Naive thymus-derived CD4-positive, alpha-beta T cell (primary cell): ENCODE measurements at regions of chr19 and their contacts with region 1.

Region 1: DNA sequence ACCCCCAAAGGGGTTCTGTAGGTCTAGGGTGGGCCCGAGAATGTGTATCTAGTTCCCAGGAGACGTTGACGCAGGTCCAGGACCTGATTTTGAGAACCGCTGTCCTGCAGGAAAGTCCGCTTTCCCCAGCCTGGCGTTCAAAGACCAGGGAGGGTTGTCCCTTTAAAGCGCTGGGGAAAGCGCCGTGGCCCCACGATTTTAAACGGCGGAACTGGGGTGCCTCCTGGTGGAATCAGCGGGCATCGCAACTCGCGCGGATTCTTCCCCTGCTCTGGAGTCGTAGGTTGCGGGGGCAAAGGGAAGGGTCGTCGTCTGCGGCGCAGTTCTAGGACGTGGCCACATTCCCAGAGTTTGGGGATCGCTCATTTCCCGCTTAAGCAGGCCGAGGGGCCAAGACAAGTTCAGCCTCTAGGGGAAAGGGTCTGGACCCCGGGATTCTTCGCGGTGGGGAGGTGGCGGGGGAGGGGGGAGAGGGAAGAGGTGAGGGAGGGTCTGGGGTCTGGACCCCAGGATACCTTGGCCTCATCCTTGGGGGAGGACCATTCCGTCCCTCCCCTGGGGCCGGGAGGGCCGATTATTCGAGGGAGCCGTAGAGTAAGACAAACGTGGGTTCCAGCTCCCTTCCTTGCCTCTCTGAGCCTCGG is 7.7 kb downstream of the PNMA8B start:
- DNase-seq: peak; percentile 43 to 80 (median 65)
- ATAC-seq: peak; percentile 79
- H3K4me3 ChIP-seq: no peak overlapping the region
- H3K4me3 Mint-ChIP-seq: peak overlapping the region in 6 of 10 donors; percentile 20 to 67 (median 35)
- H3K27ac ChIP-seq: no peak overlapping the region
- H3K27ac Mint-ChIP-seq: peak overlapping the region in 1 of 9 donors; percentile 13
- H3K4me1 ChIP-seq: peaks cover 3 to 21% of the 10 kb centered on the region in 2 donors
- H3K4me1 Mint-ChIP-seq: peaks cover 12 to 50% (median 34%) of the 10 kb centered on the region in 7 donors
- H3K27me3 ChIP-seq: peaks cover 5 to 34% of the 10 kb centered on the region in 2 donors
- H3K27me3 Mint-ChIP-seq: peaks cover 60 to 88% (median 71%) of the 10 kb centered on the region in 5 donors

Region 2: DNA sequence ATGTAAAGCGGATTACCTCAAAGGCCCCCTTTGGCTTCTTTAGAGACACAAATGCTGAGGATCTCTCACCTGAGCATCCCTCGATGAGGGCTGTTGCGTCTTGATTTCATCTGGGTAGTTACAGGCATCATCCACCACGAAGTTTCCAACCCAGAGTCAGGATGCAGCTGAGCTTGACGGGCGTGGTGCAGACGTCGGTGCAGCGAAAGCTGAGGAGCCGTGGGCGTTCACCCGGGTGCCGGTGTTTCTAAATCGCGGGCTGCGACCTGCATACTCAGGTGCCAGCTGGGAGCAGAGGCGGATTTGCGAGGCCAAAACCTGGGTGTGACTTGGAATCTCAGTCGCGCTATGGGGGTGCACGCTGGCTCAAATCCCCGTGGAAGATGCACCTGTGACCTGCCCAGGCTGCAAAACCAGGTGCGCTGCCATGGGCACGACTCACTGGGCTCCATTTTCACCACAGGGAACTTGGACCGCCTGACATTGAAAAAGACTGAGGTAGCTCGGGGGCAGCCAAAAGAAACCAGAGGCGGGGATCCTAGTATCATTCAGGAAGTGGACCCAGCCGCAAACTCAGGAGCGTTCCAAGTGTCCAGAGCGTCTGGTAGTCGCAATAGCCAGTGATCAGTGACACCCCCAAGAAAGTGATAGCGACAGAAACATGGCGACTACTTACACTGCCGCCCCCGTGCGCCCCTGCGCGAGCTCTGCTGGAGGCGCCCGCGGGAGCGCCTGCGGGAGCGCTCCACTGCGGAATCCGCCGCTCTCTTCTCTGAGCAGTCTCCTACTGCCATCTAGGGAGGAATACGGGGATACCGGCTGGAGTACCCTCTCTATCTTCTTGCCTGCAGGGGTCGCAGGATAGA is 410.7 kb before region 1 on chr19:
- CTCF ChIA-PET with region 1: no interaction called
- POLR2A ChIA-PET with region 1: no interaction called
- intact Hi-C with region 1: loop called in 1 of 2 experiments (anchors 5 kb)
- DNase-seq: peak in 2 of 9 donors; percentile 6 to 14
- ATAC-seq: peak; percentile 68
- H3K4me3 ChIP-seq: no peak overlapping the region
- H3K4me3 Mint-ChIP-seq: peak overlapping the region in 8 of 10 donors; percentile 16 to 61 (median 41)
- H3K27ac ChIP-seq: no peak overlapping the region
- H3K27ac Mint-ChIP-seq: no peak overlapping the region
- H3K4me1 ChIP-seq: no peaks in the 10 kb centered on the region
- H3K4me1 Mint-ChIP-seq: peaks cover 3 to 15% (median 9%) of the 10 kb centered on the region in 7 donors
- H3K27me3 ChIP-seq: peaks cover 0 to 12% of the 10 kb centered on the region in 2 donors
- H3K27me3 Mint-ChIP-seq: peaks cover 73 to 87% (median 77%) of the 10 kb centered on the region in 5 donors

Region 3: DNA sequence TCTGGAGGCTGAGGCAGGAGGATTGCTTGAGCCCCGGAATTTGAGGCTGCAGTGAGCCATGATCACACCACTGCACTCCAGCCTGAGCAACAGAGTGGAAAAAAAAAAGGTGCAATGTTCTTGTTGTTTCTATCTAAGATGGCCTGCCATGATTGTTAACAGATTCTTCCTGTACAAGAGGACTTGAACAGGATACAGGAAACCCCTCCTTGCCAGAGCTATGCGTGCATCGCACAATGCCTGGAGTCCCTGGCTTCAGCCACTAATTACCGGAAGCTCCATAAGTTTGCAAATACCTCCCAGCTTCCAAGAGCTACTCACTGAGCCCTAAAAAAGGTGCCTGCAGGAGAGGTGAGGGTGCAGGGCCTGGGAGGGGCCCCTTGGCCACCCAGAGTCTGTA is 204.2 kb before region 1 on chr19:
- CTCF ChIA-PET with region 1: interaction called, 5 read pairs
- POLR2A ChIA-PET with region 1: no interaction called
- intact Hi-C with region 1: loop called (anchors 1 kb)
- DNase-seq: no peak
- ATAC-seq: no peak
- H3K4me3 ChIP-seq: no peak overlapping the region
- H3K4me3 Mint-ChIP-seq: no peak overlapping the region
- H3K27ac ChIP-seq: no peak overlapping the region
- H3K27ac Mint-ChIP-seq: peak overlapping the region in 1 of 9 donors; percentile 25
- H3K4me1 ChIP-seq: no peaks in the 10 kb centered on the region
- H3K4me1 Mint-ChIP-seq: peaks cover 0 to 3% (median 0%) of the 10 kb centered on the region in 7 donors
- H3K27me3 ChIP-seq: no peaks in the 10 kb centered on the region
- H3K27me3 Mint-ChIP-seq: peaks cover 8 to 11% (median 11%) of the 10 kb centered on the region in 5 donors

Region 4: GRCh38 chr19:46308510-46308909 is 179.4 kb before region 1 on chr19:
- CTCF ChIA-PET with region 1: no interaction called
- POLR2A ChIA-PET with region 1: no interaction called
- intact Hi-C with region 1: no loop called
- DNase-seq: no peak
- ATAC-seq: no peak
- H3K4me3 ChIP-seq: no peak overlapping the region
- H3K4me3 Mint-ChIP-seq: no peak overlapping the region
- H3K27ac ChIP-seq: no peak overlapping the region
- H3K27ac Mint-ChIP-seq: no peak overlapping the region
- H3K4me1 ChIP-seq: no peaks in the 10 kb centered on the region
- H3K4me1 Mint-ChIP-seq: peaks cover 0 to 4% (median 0%) of the 10 kb centered on the region in 7 donors
- H3K27me3 ChIP-seq: no peaks in the 10 kb centered on the region
- H3K27me3 Mint-ChIP-seq: no peaks in the 10 kb centered on the region

Region 5: DNA sequence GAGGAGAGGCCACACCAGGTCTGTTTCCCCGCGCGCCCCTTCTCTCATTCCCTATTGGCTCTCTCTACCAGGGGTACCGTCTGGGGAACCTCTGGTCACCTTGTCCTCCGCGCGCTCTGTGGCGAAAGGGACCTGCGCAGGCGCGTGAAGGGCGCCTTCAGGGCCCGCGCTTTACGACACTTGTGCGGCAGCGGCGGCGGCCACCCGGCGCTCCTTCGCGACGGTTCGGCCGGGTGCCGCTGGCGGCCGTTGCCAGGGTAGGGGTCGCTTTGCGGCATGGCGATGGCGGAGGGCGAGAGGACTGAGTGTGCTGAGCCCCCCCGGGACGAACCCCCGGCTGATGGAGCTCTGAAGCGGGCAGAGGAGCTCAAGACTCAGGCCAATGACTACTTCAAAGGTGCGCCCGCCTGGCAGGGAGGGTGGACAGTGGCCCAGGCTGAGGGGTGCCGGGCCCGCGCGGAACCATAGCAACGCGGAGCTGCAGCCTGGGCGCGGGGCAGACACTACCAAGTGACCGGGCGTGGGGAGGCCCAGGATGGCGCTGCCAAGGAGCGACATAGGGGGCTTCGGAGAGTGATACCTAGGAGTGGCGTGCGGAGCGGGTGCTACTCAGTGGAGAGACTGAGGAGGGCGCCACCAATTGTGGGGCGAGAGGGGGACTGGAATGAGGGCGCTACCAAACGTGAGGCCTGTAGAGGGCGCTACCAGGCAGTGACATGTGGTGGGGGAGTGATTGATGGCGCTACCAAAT is 140.9 kb before region 1 on chr19 and contains the start of gene PPP5C:
- CTCF ChIA-PET with region 1: interaction called, 3 read pairs
- POLR2A ChIA-PET with region 1: no interaction called
- intact Hi-C with region 1: loop called in 1 of 2 experiments (anchors 2 kb)
- DNase-seq: peak; percentile 74 to 89 (median 79)
- ATAC-seq: peak; percentile 90
- H3K4me3 ChIP-seq: peak within 1 kb of the TSS; percentile 73
- H3K4me3 Mint-ChIP-seq: peak within 1 kb of the TSS; percentile 87 to 97 (median 94)
- H3K27ac ChIP-seq: peak within 1 kb of the TSS; percentile 89
- H3K27ac Mint-ChIP-seq: peak within 1 kb of the TSS; percentile 85 to 97 (median 92)
- H3K4me1 ChIP-seq: peaks cover 39 to 43% of the 10 kb centered on the region in 2 donors
- H3K4me1 Mint-ChIP-seq: peaks cover 49 to 63% (median 52%) of the 10 kb centered on the region in 7 donors
- H3K27me3 ChIP-seq: no peaks in the 10 kb centered on the region
- H3K27me3 Mint-ChIP-seq: peaks cover 0 to 23% (median 0%) of the 10 kb centered on the region in 5 donors
- total RNA-seq, gene PPP5C: 41.4 to 107 (median 52.0) TPM

Region 6: GRCh38 chr19:46392243-46392801 is 95.6 kb before region 1 on chr19:
- CTCF ChIA-PET with region 1: interaction called, 6 read pairs
- POLR2A ChIA-PET with region 1: no interaction called
- intact Hi-C with region 1: loop called (anchors 1 kb)
- DNase-seq: no peak
- ATAC-seq: no peak
- H3K4me3 ChIP-seq: no peak overlapping the region
- H3K4me3 Mint-ChIP-seq: no peak overlapping the region
- H3K27ac ChIP-seq: peak overlapping the region; percentile 19
- H3K27ac Mint-ChIP-seq: peak overlapping the region in 3 of 9 donors; percentile 2 to 51 (median 40)
- H3K4me1 ChIP-seq: no peaks in the 10 kb centered on the region
- H3K4me1 Mint-ChIP-seq: peaks cover 0 to 18% (median 6%) of the 10 kb centered on the region in 7 donors
- H3K27me3 ChIP-seq: no peaks in the 10 kb centered on the region
- H3K27me3 Mint-ChIP-seq: no peaks in the 10 kb centered on the region

Region 7: GRCh38 chr19:46404055-46404752 is 83.7 kb before region 1 on chr19:
- CTCF ChIA-PET with region 1: interaction called, 10 read pairs
- POLR2A ChIA-PET with region 1: no interaction called
- intact Hi-C with region 1: loop called (anchors 1 kb)
- DNase-seq: no peak
- ATAC-seq: peak; percentile 22
- H3K4me3 ChIP-seq: peak overlapping the region; percentile 2
- H3K4me3 Mint-ChIP-seq: peak overlapping the region; percentile 34 to 94 (median 74)
- H3K27ac ChIP-seq: no peak overlapping the region
- H3K27ac Mint-ChIP-seq: peak overlapping the region in 2 of 9 donors; percentile 42 to 74
- H3K4me1 ChIP-seq: peaks cover 0 to 15% of the 10 kb centered on the region in 2 donors
- H3K4me1 Mint-ChIP-seq: peaks cover 10 to 30% (median 21%) of the 10 kb centered on the region in 7 donors
- H3K27me3 ChIP-seq: peaks cover 0 to 15% of the 10 kb centered on the region in 2 donors
- H3K27me3 Mint-ChIP-seq: peaks cover 49 to 76% (median 57%) of the 10 kb centered on the region in 5 donors

Region 8: DNA sequence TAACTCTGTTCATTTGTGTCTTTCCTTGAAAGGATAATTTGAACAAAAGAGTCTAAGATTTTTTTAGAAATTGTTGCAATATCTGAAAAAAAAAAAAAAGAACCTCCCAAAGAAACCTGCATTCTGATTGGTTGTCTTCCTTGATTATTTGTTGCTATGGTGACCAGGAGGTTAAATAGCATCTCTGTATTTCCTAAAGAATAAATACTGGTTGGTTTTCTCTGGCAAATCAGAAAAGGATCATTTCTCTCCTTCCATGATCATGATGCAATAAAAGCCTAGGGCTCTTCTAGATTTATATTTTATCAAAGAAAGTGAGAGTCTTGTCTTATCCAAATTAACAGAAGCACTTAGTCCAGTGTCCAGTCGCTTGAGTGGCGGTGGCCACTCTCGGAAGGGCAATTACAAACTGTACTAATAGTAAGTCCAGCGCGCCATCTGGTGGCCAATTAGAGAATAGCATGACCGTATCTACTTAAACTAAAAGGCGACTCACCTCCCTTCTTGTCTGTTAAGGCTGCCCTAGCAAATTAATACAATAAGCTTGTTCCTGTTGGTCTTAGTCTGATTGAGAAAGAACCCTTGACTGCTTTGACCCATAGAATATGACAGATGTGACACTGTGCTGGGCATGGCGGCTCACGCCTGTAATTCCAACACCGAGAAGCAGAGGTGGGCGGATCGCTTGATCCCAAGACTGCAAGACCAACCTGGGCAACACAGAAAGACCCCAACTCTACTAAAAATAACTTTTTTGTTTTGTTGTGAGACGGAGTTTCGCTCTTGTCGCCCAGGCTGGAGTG is 54.7 kb after region 1 on chr19:
- CTCF ChIA-PET with region 1: interaction called, 3 read pairs
- POLR2A ChIA-PET with region 1: no interaction called
- intact Hi-C with region 1: loop called in 1 of 2 experiments (anchors 2 kb)
- DNase-seq: peak; percentile 46 to 73 (median 64)
- ATAC-seq: peak; percentile 87
- H3K4me3 ChIP-seq: no peak overlapping the region
- H3K4me3 Mint-ChIP-seq: no peak overlapping the region
- H3K27ac ChIP-seq: no peak overlapping the region
- H3K27ac Mint-ChIP-seq: peak overlapping the region in 2 of 9 donors; percentile 14 to 16
- H3K4me1 ChIP-seq: no peaks in the 10 kb centered on the region
- H3K4me1 Mint-ChIP-seq: peaks cover 2 to 13% (median 5%) of the 10 kb centered on the region in 7 donors
- H3K27me3 ChIP-seq: no peaks in the 10 kb centered on the region
- H3K27me3 Mint-ChIP-seq: peaks cover 0 to 11% (median 0%) of the 10 kb centered on the region in 5 donors

Region 9: GRCh38 chr19:46776927-46777911 is 289.3 kb after region 1 on chr19:
- CTCF ChIA-PET with region 1: no interaction called
- POLR2A ChIA-PET with region 1: no interaction called
- intact Hi-C with region 1: no loop called
- DNase-seq: no peak
- ATAC-seq: no peak
- H3K4me3 ChIP-seq: no peak overlapping the region
- H3K4me3 Mint-ChIP-seq: no peak overlapping the region
- H3K27ac ChIP-seq: no peak overlapping the region
- H3K27ac Mint-ChIP-seq: peak overlapping the region in 1 of 9 donors; percentile 42
- H3K4me1 ChIP-seq: peaks cover 0 to 3% of the 10 kb centered on the region in 2 donors
- H3K4me1 Mint-ChIP-seq: peaks cover 0 to 24% (median 0%) of the 10 kb centered on the region in 7 donors
- H3K27me3 ChIP-seq: no peaks in the 10 kb centered on the region
- H3K27me3 Mint-ChIP-seq: no peaks in the 10 kb centered on the region

Region 10: DNA sequence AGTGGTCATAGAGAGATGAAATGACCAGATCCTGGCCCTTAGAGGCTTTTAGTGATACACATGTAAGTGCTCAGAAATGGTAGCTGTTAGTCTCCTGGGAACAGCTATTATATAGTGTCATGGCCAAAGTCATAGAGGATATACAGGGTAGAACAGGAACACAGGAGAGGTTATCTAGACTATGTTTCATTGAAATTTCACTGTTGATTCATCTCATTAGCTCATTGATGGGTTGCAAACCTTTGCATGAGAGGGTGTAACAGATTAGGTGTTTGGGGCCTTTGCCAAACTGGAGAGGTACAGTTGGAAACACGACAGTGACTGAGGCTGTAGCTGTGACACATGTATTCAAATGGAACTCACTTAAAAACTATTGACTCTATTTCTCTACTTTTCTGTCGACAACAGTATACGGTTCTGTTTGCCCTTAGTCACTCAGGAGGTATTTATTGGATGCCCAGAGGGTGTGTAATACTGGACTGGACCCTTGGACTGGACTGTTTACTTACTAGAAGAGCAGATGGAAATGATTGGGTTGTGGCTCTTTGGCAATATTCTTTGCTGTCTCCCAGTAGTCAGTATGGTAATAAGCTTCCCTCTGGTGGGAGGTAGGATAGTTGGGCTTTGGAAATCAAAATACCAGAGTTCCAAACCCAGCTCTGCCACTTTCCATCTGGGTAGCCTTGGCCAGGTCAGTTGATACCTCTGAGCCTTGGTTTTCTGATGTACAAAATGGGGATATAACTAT is 402.7 kb after region 1 on chr19:
- CTCF ChIA-PET with region 1: no interaction called
- POLR2A ChIA-PET with region 1: no interaction called
- intact Hi-C with region 1: no loop called
- DNase-seq: no peak
- ATAC-seq: no peak
- H3K4me3 ChIP-seq: no peak overlapping the region
- H3K4me3 Mint-ChIP-seq: peak overlapping the region in 1 of 10 donors; percentile 26
- H3K27ac ChIP-seq: no peak overlapping the region
- H3K27ac Mint-ChIP-seq: no peak overlapping the region
- H3K4me1 ChIP-seq: no peaks in the 10 kb centered on the region
- H3K4me1 Mint-ChIP-seq: peaks cover 18 to 55% (median 41%) of the 10 kb centered on the region in 7 donors
- H3K27me3 ChIP-seq: no peaks in the 10 kb centered on the region
- H3K27me3 Mint-ChIP-seq: no peaks in the 10 kb centered on the region